ENCODE measurements at regions of chr4 and their contacts with region 1.

Region 1: GRCh38 chr4:90951027-90951426 is 823.8 kb downstream of the CCSER1 start:
- DNase-seq: peak; percentile 92
- ATAC-seq: peak; percentile 97
- H3K4me3 ChIP-seq: peak overlapping the region; percentile 46
- H3K27ac ChIP-seq: peak overlapping the region; percentile 74
- H3K4me1 ChIP-seq: peaks cover 29% of the 10 kb centered on the region
- H3K27me3 ChIP-seq: no peaks in the 10 kb centered on the region
- CTCF ChIP-seq: no peak

Region 2: DNA sequence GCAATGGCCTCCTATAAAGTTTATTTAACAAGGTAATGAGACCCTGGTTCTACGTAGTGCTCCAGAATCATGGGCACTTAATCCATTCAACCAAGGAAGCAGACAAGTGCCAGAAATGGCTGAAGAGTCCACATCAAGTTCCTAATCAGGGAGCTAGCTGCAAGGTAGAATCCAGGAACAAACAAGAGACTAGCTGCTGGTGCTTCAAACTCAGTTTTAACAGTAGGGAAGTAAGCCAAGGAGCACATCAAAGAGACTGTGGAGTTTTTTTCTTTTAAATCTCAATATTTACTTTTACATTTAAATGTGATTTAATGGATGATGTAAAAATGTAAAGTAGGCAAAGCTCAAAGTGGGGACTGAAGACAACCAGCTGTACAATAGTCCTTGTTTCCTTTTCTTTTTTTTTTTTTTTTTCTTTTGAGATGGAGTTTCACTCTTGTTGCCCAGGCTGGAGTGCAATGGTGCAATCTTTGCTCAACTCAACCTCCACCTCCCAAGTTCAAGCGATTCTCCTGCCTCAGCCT is 193.4 kb before region 1 on chr4:
- CTCF ChIA-PET with region 1: no interaction called
- POLR2A ChIA-PET with region 1: no interaction called
- intact Hi-C with region 1: loop called (anchors 10 kb)
- DNase-seq: no peak
- ATAC-seq: no peak
- H3K4me3 ChIP-seq: no peak overlapping the region
- H3K27ac ChIP-seq: no peak overlapping the region
- H3K4me1 ChIP-seq: peaks cover 6% of the 10 kb centered on the region
- H3K27me3 ChIP-seq: no peaks in the 10 kb centered on the region
- CTCF ChIP-seq: no peak

Region 3: DNA sequence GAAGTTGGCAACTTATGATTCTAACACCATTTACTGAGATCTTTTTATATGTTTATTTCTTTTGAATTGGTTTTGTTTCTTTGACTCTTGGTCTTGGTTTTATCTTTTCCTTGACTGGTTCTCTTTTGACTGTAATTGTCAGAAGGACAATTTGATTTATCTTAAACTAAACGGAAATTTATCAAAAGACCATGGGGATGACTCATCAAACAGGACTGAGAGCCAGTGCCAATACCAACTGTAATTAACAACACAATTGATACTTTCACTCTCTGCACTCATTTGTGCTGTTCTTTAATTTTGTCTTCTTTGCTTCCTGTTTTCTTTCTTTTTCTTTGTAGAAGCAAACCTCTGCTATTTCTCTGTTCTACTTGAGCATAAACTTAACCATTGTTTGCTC is 47.0 kb before region 1 on chr4:
- CTCF ChIA-PET with region 1: no interaction called
- POLR2A ChIA-PET with region 1: no interaction called
- intact Hi-C with region 1: no loop called
- DNase-seq: no peak
- ATAC-seq: no peak
- H3K4me3 ChIP-seq: no peak overlapping the region
- H3K27ac ChIP-seq: no peak overlapping the region
- H3K4me1 ChIP-seq: no peaks in the 10 kb centered on the region
- H3K27me3 ChIP-seq: no peaks in the 10 kb centered on the region
- CTCF ChIP-seq: no peak

Region 4: GRCh38 chr4:91035276-91035675 is 84.2 kb after region 1 on chr4:
- CTCF ChIA-PET with region 1: no interaction called
- POLR2A ChIA-PET with region 1: no interaction called
- intact Hi-C with region 1: loop called (anchors 10 kb)
- DNase-seq: no peak
- ATAC-seq: no peak
- H3K4me3 ChIP-seq: no peak overlapping the region
- H3K27ac ChIP-seq: no peak overlapping the region
- H3K4me1 ChIP-seq: no peaks in the 10 kb centered on the region
- H3K27me3 ChIP-seq: no peaks in the 10 kb centered on the region
- CTCF ChIP-seq: no peak

Measured in PC-3 (cell line).